ENCODE measurements at regions of chr11 and their contacts with region 1.

Region 1: GRCh38 chr11:44621140-44621681 is 55.7 kb downstream of the CD82 start:
- DNase-seq: peak; percentile 63
- H3K4me3 ChIP-seq: no peak overlapping the region
- H3K27ac ChIP-seq: no peak overlapping the region
- H3K4me1 ChIP-seq: peaks cover 23% of the 10 kb centered on the region
- H3K27me3 ChIP-seq: no peaks in the 10 kb centered on the region
- CTCF ChIP-seq: peak; percentile 94 to 98
- POLR2A ChIP-seq: no peak

Region 2: DNA sequence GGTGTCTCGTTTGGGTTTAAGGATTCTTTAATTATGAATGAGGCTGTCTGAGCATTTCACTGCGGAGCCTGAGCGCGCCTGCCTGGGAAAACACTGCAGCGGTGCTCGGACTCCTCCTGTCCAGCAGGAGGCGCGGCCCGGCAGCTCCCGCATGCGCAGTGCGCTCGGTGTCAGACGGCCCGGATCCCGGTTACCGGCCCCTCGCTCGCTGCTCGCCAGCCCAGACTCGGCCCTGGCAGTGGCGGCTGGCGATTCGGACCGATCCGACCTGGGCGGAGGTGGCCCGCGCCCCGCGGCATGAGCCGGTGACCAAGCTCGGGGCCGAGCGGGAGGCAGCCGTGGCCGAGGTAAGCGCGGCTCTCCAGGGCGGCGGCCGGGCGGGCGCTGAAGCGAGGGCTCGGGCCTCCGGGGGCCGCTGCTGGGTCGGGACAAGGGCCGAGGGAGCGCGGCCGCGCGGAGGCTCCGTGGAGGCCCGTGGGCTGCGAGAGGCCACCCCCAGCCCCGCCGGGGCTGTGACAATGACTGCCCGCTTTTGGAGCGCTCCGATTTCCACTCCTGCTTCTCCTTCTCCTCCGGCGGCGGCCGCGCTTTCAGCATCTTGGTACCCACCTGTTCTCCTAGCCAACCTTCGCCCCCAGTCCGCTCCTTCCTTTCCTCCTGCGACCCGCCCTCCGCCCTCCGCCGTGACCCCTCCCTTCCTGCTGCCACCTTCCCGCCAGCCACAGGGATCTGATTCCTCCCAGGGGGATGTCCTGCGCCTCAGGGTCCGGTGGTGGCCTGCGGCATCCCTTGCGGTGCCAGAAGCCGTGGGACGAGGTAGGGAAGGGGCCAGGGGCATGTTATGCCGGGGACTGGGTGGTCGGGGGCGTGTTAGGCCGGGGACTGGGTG is 525.5 kb before region 1 on chr11 and contains the start of gene EXT2:
- CTCF ChIA-PET with region 1: interaction called, 13 read pairs
- POLR2A ChIA-PET with region 1: no interaction called
- dilution Hi-C with region 1: no loop called
- intact Hi-C with region 1: no loop called
- DNase-seq: peak; percentile 84
- H3K4me3 ChIP-seq: peak within 1 kb of the TSS; percentile 49 to 75 (median 62)
- H3K27ac ChIP-seq: no peak within 1 kb of the TSS
- H3K4me1 ChIP-seq: peaks cover 13% of the 10 kb centered on the region
- H3K27me3 ChIP-seq: peaks cover 21 to 27% of the 10 kb centered on the region in 2 experiments
- CTCF ChIP-seq: peak; percentile 89 to 94
- POLR2A ChIP-seq: peak; percentile 50
- total RNA-seq, gene EXT2: 50.9 and 65.1 TPM in 2 replicates

Region 3: DNA sequence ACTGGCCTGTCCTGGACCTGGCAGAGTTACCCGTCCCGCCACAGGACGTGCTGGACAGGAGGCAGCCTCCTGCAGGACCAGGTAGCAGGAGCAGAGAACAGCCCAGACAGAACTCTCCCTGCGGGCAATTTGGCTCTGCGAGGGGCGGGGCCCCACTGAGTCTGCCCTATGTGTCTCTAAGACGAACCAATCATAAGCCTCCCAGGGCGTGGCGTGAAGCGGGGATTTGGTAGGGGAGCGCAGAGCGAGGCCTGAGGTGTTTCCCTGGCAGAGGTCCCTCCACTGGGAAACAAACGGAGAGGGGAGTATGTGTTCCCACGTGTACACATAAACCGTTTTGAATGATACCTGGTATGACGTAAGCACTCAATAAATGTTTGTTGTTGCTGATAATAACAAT is 48.3 kb before region 1 on chr11:
- CTCF ChIA-PET with region 1: interaction called, 24 read pairs
- POLR2A ChIA-PET with region 1: no interaction called
- dilution Hi-C with region 1: no loop called
- intact Hi-C with region 1: no loop called
- DNase-seq: no peak
- H3K4me3 ChIP-seq: no peak overlapping the region
- H3K27ac ChIP-seq: no peak overlapping the region
- H3K4me1 ChIP-seq: peaks cover 33% of the 10 kb centered on the region
- H3K27me3 ChIP-seq: no peaks in the 10 kb centered on the region
- CTCF ChIP-seq: no peak
- POLR2A ChIP-seq: no peak

Region 4: GRCh38 chr11:44658506-44658850 is 37.3 kb after region 1 on chr11:
- CTCF ChIA-PET with region 1: interaction called, 12 read pairs
- POLR2A ChIA-PET with region 1: no interaction called
- dilution Hi-C with region 1: no loop called
- intact Hi-C with region 1: no loop called
- DNase-seq: peak; percentile 55
- H3K4me3 ChIP-seq: no peak overlapping the region
- H3K27ac ChIP-seq: no peak overlapping the region
- H3K4me1 ChIP-seq: no peaks in the 10 kb centered on the region
- H3K27me3 ChIP-seq: peaks cover 0 to 3% of the 10 kb centered on the region in 2 experiments
- CTCF ChIP-seq: peak; percentile 39 to 55
- POLR2A ChIP-seq: no peak

Region 5: GRCh38 chr11:44886790-44887140 is 265.6 kb after region 1 on chr11:
- CTCF ChIA-PET with region 1: interaction called, 75 read pairs
- POLR2A ChIA-PET with region 1: no interaction called
- dilution Hi-C with region 1: loop called (anchors 10 kb)
- intact Hi-C with region 1: no loop called
- DNase-seq: peak; percentile 10
- H3K4me3 ChIP-seq: no peak overlapping the region
- H3K27ac ChIP-seq: no peak overlapping the region
- H3K4me1 ChIP-seq: peaks cover 8% of the 10 kb centered on the region
- H3K27me3 ChIP-seq: no peaks in the 10 kb centered on the region
- CTCF ChIP-seq: no peak
- POLR2A ChIP-seq: no peak

Region 6: GRCh38 chr11:44927174-44927661 is 306.0 kb after region 1 on chr11:
- CTCF ChIA-PET with region 1: interaction called, 33 read pairs
- POLR2A ChIA-PET with region 1: no interaction called
- dilution Hi-C with region 1: no loop called
- intact Hi-C with region 1: no loop called
- DNase-seq: peak; percentile 52
- H3K4me3 ChIP-seq: no peak overlapping the region
- H3K27ac ChIP-seq: no peak overlapping the region
- H3K4me1 ChIP-seq: no peaks in the 10 kb centered on the region
- H3K27me3 ChIP-seq: no peaks in the 10 kb centered on the region
- CTCF ChIP-seq: peak; percentile 79 to 85
- POLR2A ChIP-seq: no peak

Region 7: GRCh38 chr11:45042557-45042956 is 421.3 kb after region 1 on chr11:
- CTCF ChIA-PET with region 1: no interaction called
- POLR2A ChIA-PET with region 1: no interaction called
- dilution Hi-C with region 1: no loop called
- intact Hi-C with region 1: no loop called
- DNase-seq: no peak
- H3K4me3 ChIP-seq: no peak overlapping the region
- H3K27ac ChIP-seq: no peak overlapping the region
- H3K4me1 ChIP-seq: peaks cover 7% of the 10 kb centered on the region
- H3K27me3 ChIP-seq: peaks cover 0 to 3% of the 10 kb centered on the region in 2 experiments
- CTCF ChIP-seq: no peak
- POLR2A ChIP-seq: no peak

Measured in endothelial cell of umbilical vein (primary cell).